Endothelial cell of umbilical vein (primary cell): ENCODE measurements at regions of chr6 and their contacts with region 1.

Region 1: DNA sequence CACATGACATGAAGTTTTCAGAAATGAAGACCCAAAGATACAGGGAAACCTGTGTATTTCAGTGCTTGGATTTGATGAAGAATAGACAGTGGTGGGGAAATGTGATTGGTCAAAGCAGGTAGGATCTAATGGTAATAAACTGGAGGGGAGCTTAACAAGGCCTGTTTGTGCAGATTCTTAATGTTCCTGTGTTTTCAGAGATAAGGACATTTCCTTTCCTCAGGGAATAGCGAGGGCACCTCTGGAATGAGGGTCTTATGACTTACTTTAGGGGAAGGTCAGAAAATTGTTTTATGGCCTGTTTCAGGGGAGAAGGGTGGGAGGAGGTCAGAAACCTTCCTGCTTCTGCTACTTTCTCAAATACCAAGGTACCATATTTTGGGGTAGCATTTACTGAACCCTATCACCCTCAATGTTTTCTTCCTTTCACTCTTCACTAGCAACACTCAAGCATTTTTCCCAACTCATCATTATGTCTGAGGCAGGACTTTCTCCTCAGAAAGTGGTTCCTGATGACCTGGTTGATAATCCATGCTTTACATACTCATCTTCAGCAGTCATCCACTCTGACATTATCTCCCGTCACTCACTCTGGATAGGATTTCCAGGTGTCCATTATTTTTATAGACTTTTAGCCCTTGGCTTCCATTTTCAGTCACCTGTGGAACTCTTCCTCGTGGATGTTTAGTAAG is 21.0 kb downstream of the ZNF292 start:
- DNase-seq: no peak
- H3K4me3 ChIP-seq: no peak overlapping the region
- H3K27ac ChIP-seq: no peak overlapping the region
- H3K4me1 ChIP-seq: no peaks in the 10 kb centered on the region
- H3K27me3 ChIP-seq: no peaks in the 10 kb centered on the region
- CTCF ChIP-seq: no peak
- POLR2A ChIP-seq: no peak

Region 2: DNA sequence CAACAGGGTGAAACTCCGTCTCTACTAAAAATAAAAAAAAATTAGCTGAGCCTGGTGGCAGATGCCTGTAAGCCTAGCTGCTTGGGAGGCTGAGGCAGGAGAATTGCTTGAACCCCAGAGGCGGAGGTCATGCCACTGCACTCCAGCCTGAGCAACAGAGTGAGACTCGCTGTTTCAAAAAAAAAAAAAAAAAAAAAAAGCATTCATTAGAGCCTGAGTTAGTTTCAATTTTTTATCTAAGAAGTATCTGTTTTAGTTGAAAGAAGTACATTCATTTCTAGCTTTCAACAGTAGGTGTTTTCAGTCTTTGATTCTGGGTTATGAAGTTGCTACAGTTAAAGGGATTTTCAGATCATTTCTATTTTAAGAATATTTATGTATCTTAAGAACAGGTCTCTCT is 21.2 kb after region 1 on chr6:
- CTCF ChIA-PET with region 1: no interaction called
- POLR2A ChIA-PET with region 1: interaction called, 10 read pairs
- dilution Hi-C with region 1: no loop called
- intact Hi-C with region 1: no loop called
- DNase-seq: no peak
- H3K4me3 ChIP-seq: no peak overlapping the region
- H3K27ac ChIP-seq: no peak overlapping the region
- H3K4me1 ChIP-seq: no peaks in the 10 kb centered on the region
- H3K27me3 ChIP-seq: no peaks in the 10 kb centered on the region
- CTCF ChIP-seq: no peak
- POLR2A ChIP-seq: no peak